Panc1 (cell line): ENCODE measurements at regions of chrX and their contacts with region 1.

Region 1: DNA sequence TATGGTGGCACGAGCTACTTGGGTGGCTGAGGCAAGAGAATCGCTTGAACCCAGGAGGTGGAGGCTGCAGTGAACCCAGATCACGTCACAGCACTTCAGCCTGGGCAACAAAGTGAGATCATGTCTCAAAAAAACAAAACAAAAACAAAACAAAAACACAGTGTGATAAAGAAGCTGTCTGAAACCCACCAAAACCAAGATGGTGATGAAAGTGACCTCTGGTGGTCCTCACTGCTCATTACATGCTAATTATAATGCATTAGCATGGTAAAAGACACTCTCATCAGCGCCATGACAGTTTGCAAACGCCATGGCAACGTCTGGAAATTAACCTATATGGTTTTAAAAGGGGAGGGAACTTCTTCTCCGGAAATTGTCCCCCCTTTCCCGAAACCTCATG is 29.4 kb upstream of the OPHN1 start:
- DNase-seq: peak; percentile 27
- ATAC-seq: peak; percentile 73; the same call in 1 of the 2 replicates
- H3K4me3 ChIP-seq: no peak overlapping the region
- H3K27ac ChIP-seq: no peak overlapping the region
- H3K4me1 ChIP-seq: no peaks in the 10 kb centered on the region; the same call in 1 of the 2 replicates
- H3K27me3 ChIP-seq: no peaks in the 10 kb centered on the region
- CTCF ChIP-seq: peak; percentile 71

Region 2: DNA sequence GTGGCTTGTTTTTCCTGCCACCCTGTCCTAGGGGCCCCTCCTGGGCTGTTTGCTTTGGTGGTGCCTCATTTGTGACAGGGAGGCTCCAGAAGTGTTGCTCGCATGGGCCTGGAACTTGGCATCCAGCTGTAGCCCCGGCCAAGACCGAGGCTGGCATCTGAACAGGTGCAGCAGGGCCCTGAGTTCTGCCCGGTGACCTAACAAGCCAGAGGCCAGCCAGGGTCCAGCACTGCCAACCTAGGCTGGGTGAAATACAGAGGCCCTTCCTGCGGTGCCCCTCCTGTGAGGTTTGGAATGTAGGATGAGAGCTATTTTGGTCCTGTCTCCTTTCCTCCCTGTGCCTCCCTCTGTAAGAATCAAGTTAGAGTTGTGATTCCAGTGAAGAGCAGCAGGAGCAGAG is 243.3 kb after region 1 on chrX:
- CTCF ChIA-PET with region 1: no interaction called
- POLR2A ChIA-PET with region 1: interaction called, 10 read pairs
- in situ Hi-C with region 1: no loop called
- intact Hi-C with region 1: no loop called
- DNase-seq: no peak
- ATAC-seq: no peak
- H3K4me3 ChIP-seq: no peak overlapping the region
- H3K27ac ChIP-seq: no peak overlapping the region
- H3K4me1 ChIP-seq: no peaks in the 10 kb centered on the region
- H3K27me3 ChIP-seq: no peaks in the 10 kb centered on the region
- CTCF ChIP-seq: no peak